ENCODE measurements at regions of chr15 and their contacts with region 1.

Region 1: GRCh38 chr15:66619151-66619903 is 53.5 kb upstream of the LCTL start:
- DNase-seq: peak; percentile 31
- H3K4me3 Mint-ChIP-seq: no peak overlapping the region
- H3K27ac Mint-ChIP-seq: no peak overlapping the region
- H3K4me1 Mint-ChIP-seq: no peaks in the 10 kb centered on the region
- H3K27me3 Mint-ChIP-seq: peaks cover 19% of the 10 kb centered on the region

Region 2: DNA sequence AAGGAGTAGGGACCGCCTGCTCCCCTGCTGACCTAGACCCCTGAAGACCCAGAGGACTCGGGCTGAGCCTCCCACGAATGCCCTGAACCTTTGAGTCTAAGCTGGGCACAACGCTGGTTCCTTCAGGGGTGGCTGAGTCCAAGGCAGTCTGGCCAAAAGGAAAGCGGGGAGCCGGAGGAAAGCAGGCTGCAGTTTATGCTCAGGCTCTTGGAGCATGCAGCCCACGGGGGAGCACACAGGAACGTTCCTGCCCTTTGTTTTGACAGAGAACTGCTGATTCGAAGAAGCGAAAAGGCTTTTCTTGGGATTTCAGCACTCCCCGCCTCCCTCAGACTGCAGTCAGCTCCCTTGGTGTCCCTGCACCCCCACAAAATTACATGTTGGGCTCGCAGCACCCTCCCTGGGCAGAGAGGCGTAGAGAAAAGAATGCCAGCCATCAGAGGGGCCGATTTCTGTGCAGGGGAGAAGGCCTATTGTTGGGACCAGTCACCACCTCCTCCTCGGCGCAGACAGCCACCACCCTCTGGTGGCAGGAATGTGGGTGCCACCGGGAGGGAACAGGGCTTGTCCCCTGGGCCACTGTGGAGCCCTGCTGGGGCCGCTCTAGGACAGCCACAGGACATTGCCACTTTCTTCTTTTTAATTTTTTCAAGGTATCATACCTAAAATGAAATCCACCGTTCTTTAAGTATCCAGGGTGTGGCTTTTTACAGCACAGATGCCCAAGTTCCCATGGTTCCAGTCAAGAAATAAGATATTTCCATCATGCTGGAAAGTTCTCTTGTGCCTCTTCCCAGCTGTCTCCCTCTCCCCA is 154.9 kb after region 1 on chr15:
- intact Hi-C with region 1: loop called (anchors 1 kb)
- DNase-seq: peak; percentile 14
- H3K4me3 Mint-ChIP-seq: no peak overlapping the region
- H3K27ac Mint-ChIP-seq: no peak overlapping the region
- H3K4me1 Mint-ChIP-seq: no peaks in the 10 kb centered on the region
- H3K27me3 Mint-ChIP-seq: peaks cover under 1% of the 10 kb centered on the region

Region 3: DNA sequence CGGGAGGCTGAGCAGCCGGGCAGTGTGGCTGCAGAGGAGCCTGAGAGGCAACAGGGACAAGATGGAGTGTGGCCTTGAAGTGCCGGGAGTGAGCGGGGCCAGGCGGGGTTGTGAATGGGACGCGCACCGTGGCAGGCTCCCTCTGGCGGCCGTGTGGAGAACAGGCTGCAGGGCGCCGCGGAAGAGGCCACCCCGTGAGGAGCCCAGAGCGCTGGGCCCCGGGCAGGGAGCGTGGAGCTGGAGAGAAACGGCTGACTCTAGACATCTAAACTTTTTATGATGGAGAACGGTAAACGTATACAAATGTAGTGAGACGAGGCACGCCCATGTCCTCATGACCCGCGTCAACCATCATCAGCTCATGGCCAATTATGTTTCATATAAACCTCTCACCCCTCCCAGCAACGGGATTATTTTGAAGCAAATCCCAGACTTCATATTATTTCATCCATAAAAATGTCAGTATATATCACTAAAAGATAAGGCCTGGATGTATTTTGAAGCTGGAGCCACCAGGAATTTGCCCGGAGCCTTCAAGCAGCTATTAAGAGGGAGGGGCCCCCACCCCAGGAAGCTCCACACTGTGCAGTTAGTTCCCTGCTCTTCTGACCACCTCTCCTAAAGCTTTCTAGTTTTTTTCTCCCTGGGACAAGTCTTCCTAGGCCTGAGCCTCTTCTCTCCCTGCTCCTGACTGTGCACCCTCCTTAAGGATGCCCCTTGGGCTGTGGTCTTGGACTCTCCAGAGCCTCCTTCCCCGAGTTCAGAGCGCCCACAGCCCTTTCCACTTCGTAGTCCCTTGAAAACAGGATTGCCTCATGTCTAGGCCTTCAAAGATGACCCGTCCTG is 232.1 kb after region 1 on chr15:
- intact Hi-C with region 1: loop called (anchors 1 kb)
- DNase-seq: peak; percentile 67
- H3K4me3 Mint-ChIP-seq: no peak overlapping the region
- H3K27ac Mint-ChIP-seq: no peak overlapping the region
- H3K4me1 Mint-ChIP-seq: no peaks in the 10 kb centered on the region
- H3K27me3 Mint-ChIP-seq: peaks cover 7% of the 10 kb centered on the region

Region 4: GRCh38 chr15:67433495-67434099 is 814.3 kb after region 1 on chr15:
- intact Hi-C with region 1: no loop called
- DNase-seq: no peak
- H3K4me3 Mint-ChIP-seq: no peak overlapping the region
- H3K27ac Mint-ChIP-seq: no peak overlapping the region
- H3K4me1 Mint-ChIP-seq: no peaks in the 10 kb centered on the region
- H3K27me3 Mint-ChIP-seq: peaks cover 5% of the 10 kb centered on the region